MCF 10A (cell line): ENCODE measurements at regions of chrX and their contacts with region 1.

Region 1: DNA sequence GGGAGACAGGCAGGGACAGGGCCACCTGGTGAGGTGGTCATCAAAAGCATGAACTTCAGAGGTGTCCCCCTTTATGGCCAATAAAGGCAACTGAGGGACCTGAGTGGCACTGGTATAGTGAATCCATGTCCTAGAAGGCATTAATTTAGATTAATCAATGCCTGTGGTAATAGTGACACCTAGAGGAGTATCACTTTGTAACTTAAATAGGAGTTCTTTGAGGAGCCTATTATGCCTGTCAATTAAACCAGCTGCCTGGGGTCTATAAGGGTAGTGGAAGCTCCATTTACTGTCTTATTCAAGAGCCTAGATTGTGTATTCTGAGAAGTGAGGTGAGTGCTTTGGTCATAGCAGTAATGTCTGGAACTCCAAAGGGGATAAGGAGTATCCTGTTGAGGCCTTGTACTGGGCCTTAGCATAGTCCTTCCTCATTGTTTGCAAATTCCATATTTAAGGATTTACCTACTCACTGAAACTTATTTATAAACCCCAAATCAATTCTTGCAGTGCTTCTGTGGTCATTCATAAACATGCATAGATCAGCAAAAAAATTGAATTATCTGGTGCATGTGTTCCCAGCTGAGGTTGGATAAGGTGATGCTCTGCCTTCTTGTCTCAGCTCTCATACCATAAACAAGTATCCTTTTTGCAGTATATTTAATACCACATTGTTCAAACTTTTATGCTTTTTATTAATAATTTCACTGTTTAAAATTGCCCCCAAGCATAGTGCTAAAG is 213.8 kb upstream of the RADX start:
- DNase-seq: peak; percentile 38
- H3K4me3 Mint-ChIP-seq: no peak overlapping the region
- H3K27ac Mint-ChIP-seq: no peak overlapping the region
- H3K4me1 Mint-ChIP-seq: no peaks in the 10 kb centered on the region
- H3K27me3 Mint-ChIP-seq: peaks cover 33% of the 10 kb centered on the region
- CTCF ChIP-seq: peak; percentile 42

Region 2: GRCh38 chrX:105975382-105975781 is 422.6 kb before region 1 on chrX:
- CTCF ChIA-PET with region 1: interaction called, 5 read pairs
- POLR2A ChIA-PET with region 1: no interaction called
- intact Hi-C with region 1: loop called (anchors 1 kb)
- DNase-seq: peak; percentile 48
- H3K4me3 Mint-ChIP-seq: no peak overlapping the region
- H3K27ac Mint-ChIP-seq: no peak overlapping the region
- H3K4me1 Mint-ChIP-seq: peaks cover 11% of the 10 kb centered on the region
- H3K27me3 Mint-ChIP-seq: peaks cover 65% of the 10 kb centered on the region
- CTCF ChIP-seq: peak; percentile 40

Region 3: DNA sequence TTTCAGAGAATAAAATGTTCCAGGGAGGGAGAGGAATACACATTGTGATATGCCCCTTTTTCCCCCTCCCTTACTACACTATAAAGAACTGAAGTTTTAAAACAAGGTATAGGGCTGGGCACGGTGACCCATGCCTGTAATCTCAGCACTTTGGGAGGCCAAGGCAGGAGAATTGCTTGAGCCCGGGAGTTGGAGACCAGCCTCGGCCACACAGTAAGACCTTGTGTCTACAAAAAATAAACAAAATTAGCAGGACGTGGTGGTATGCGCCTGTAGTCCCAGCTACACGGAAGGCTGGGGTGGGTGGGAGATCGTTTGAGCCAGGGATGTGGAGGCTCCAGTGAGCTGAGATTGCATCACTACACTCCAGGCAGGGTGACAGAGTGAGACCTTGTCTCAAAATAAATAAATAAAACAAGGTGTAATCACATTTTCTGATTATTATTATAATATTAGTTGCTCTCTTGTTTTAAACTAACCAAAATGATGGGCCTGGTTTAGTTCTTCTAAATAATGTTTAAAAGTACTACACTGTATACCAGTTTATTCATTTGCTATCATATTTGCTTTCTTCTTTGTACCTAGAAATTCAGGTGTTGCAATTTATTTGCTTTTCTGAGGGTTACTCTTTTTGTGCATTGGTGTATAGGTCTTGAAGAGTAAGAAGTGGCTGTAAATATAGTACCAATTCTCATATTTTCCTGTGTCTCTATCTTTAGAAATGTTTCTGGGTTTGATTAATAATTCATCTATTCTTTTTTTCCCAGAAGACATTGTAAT is 413.4 kb after region 1 on chrX:
- CTCF ChIA-PET with region 1: no interaction called
- POLR2A ChIA-PET with region 1: no interaction called
- intact Hi-C with region 1: no loop called
- DNase-seq: no peak
- H3K4me3 Mint-ChIP-seq: no peak overlapping the region
- H3K27ac Mint-ChIP-seq: no peak overlapping the region
- H3K4me1 Mint-ChIP-seq: no peaks in the 10 kb centered on the region
- H3K27me3 Mint-ChIP-seq: peaks cover 27% of the 10 kb centered on the region
- CTCF ChIP-seq: no peak